ENCODE measurements at regions of chr21 and their contacts with region 1.

Region 1: GRCh38 chr21:17527240-17527639 is 14.4 kb downstream of the CXADR start:
- DNase-seq: peak; percentile 86
- H3K4me3 ChIP-seq: peak overlapping the region in 1 of 3 experiments; percentile 33
- H3K27ac ChIP-seq: peak overlapping the region; percentile 88
- H3K4me1 ChIP-seq: peaks cover 31% of the 10 kb centered on the region
- H3K27me3 ChIP-seq: no peaks in the 10 kb centered on the region
- CTCF ChIP-seq: no peak
- POLR2A ChIP-seq: no peak

Region 2: DNA sequence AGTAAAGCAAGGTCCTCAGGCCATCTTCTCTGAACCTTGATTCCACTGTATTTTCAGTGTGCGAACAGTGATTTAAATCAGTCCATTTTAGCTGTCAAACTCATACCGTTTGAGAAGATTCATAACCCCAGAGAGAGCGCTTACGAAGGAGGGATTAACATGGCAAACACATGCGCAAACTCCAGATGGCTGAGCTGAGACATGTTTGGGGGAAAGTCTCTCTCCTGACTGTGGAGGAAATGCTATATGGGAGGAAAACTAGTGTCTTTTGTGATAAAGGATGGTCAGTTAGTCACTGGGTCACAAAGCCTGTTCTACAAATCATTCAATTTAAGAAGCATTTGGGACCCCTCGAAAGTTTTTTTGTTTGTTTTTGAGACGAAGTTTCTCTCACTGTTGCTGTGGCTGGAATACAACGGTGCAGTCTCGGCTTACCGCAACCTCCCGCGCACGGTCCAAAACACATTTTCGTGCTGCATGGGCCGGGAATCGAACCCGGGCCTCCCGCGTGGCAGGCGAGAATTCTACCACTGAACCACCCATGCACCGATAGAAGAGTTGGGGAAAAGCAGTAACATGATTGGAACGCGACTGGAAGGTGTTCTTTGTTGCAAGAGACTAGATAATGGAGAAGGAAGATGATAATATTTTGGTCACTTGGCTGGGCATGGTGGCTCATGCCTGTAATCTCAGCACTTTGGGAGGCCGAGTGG is 72.8 kb before region 1 on chr21:
- CTCF ChIA-PET with region 1: no interaction called
- POLR2A ChIA-PET with region 1: no interaction called
- dilution Hi-C with region 1: no loop called
- intact Hi-C with region 1: loop called (anchors 5 kb)
- DNase-seq: peak; percentile 73
- H3K4me3 ChIP-seq: no peak overlapping the region
- H3K27ac ChIP-seq: peak overlapping the region; percentile 43
- H3K4me1 ChIP-seq: peaks cover 15% of the 10 kb centered on the region
- H3K27me3 ChIP-seq: no peaks in the 10 kb centered on the region
- CTCF ChIP-seq: no peak
- POLR2A ChIP-seq: no peak

Region 3: GRCh38 chr21:17512253-17513213 is 14.7 kb before region 1 on chr21 and contains the start of gene CXADR:
- CTCF ChIA-PET with region 1: interaction called, 16 read pairs
- POLR2A ChIA-PET with region 1: no interaction called
- dilution Hi-C with region 1: no loop called
- intact Hi-C with region 1: loop called (anchors 1 kb)
- DNase-seq: peak; percentile 48
- H3K4me3 ChIP-seq: peak within 1 kb of the TSS; percentile 11 to 97 (median 73)
- H3K27ac ChIP-seq: peak within 1 kb of the TSS; percentile 26
- H3K4me1 ChIP-seq: peaks cover 15% of the 10 kb centered on the region
- H3K27me3 ChIP-seq: peaks cover 2 to 19% of the 10 kb centered on the region in 2 experiments
- CTCF ChIP-seq: peak; percentile 21 to 77
- POLR2A ChIP-seq: no peak
- total RNA-seq, gene CXADR: 10.7 and 12.2 TPM in 2 replicates

Region 4: GRCh38 chr21:17542371-17543011 is 15.3 kb after region 1 on chr21:
- CTCF ChIA-PET with region 1: interaction called, 30 read pairs
- POLR2A ChIA-PET with region 1: no interaction called
- dilution Hi-C with region 1: no loop called
- intact Hi-C with region 1: no loop called
- DNase-seq: peak; percentile 54
- H3K4me3 ChIP-seq: no peak overlapping the region
- H3K27ac ChIP-seq: no peak overlapping the region
- H3K4me1 ChIP-seq: peaks cover 11% of the 10 kb centered on the region
- H3K27me3 ChIP-seq: peaks cover 0 to 2% of the 10 kb centered on the region in 2 experiments
- CTCF ChIP-seq: no peak
- POLR2A ChIP-seq: no peak

Region 5: GRCh38 chr21:17611414-17612022 is 84.3 kb after region 1 on chr21:
- CTCF ChIA-PET with region 1: no interaction called
- POLR2A ChIA-PET with region 1: no interaction called
- dilution Hi-C with region 1: no loop called
- intact Hi-C with region 1: loop called (anchors 1 kb)
- DNase-seq: peak; percentile 93
- H3K4me3 ChIP-seq: peak overlapping the region; percentile 76 to 94 (median 93)
- H3K27ac ChIP-seq: peak overlapping the region; percentile 97
- H3K4me1 ChIP-seq: peaks cover 10% of the 10 kb centered on the region
- H3K27me3 ChIP-seq: peaks cover 0 to 2% of the 10 kb centered on the region in 2 experiments
- CTCF ChIP-seq: no peak
- POLR2A ChIP-seq: peak; percentile 27

Measured in endothelial cell of umbilical vein (primary cell).